Naive thymus-derived CD4-positive, alpha-beta T cell (primary cell): ENCODE measurements at regions of chr7 and their contacts with region 1.

Region 1: DNA sequence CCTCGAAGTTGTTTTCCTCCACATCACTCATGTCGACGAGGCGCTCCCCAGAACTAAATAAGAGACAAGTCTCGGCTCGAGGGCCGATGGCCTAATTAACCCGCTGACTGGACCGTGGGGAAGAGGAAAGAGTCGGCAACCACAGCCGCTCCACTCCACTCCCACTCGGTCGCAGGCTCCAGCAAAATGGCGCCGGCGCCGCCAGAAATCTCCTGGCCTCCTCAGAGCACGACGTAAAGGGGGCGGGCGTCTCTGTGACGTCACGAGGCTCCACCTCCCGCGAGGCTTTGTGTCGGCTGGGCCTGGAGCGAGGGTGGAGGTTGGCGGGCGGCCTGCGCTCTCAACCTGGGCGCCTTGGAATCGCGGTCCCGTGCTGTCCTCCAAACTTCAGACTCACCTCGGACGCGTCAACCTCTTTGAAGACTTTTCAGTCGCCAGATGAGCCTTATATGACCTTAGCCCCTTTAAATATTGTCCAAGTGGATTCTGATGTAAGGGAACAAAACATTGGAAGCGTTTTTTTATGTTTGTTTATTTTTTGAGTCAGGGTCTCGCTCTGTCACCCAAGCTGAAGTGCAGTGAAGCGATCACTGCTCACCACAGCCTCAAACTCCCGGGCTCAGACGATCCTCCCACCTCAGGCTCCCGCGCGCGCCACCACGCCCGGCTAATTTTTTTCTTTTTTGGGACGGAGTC is at the start of gene TRA2A:
- DNase-seq: peak; percentile 93 to 97 (median 95)
- ATAC-seq: peak; percentile 96
- H3K4me3 ChIP-seq: peak within 1 kb of the TSS; percentile 80
- H3K4me3 Mint-ChIP-seq: peak within 1 kb of the TSS; percentile 89 to 100 (median 99)
- H3K27ac ChIP-seq: peak within 1 kb of the TSS; percentile 93
- H3K27ac Mint-ChIP-seq: peak within 1 kb of the TSS; percentile 98 to 100 (median 100)
- H3K4me1 ChIP-seq: peaks cover 30 to 31% of the 10 kb centered on the region in 2 donors
- H3K4me1 Mint-ChIP-seq: peaks cover 28 to 51% (median 46%) of the 10 kb centered on the region in 7 donors
- H3K27me3 ChIP-seq: no peaks in the 10 kb centered on the region
- H3K27me3 Mint-ChIP-seq: no peaks in the 10 kb centered on the region
- total RNA-seq, gene TRA2A: 131 to 263 (median 163) TPM

Region 2: GRCh38 chr7:23105644-23106056 is 426.3 kb before region 1 on chr7 and contains the start of gene KLHL7:
- CTCF ChIA-PET with region 1: no interaction called
- POLR2A ChIA-PET with region 1: interaction called, 3 read pairs
- intact Hi-C with region 1: loop called (anchors 1 kb)
- DNase-seq: peak; percentile 90 to 95 (median 93)
- ATAC-seq: peak; percentile 99
- H3K4me3 ChIP-seq: peak within 1 kb of the TSS; percentile 93
- H3K4me3 Mint-ChIP-seq: peak within 1 kb of the TSS; percentile 90 to 99 (median 96)
- H3K27ac ChIP-seq: peak within 1 kb of the TSS; percentile 90
- H3K27ac Mint-ChIP-seq: peak within 1 kb of the TSS; percentile 91 to 97 (median 96)
- H3K4me1 ChIP-seq: peaks cover 4 to 18% of the 10 kb centered on the region in 2 donors
- H3K4me1 Mint-ChIP-seq: peaks cover 33 to 51% (median 47%) of the 10 kb centered on the region in 7 donors
- H3K27me3 ChIP-seq: no peaks in the 10 kb centered on the region
- H3K27me3 Mint-ChIP-seq: no peaks in the 10 kb centered on the region
- total RNA-seq, gene KLHL7: 16.9 to 22.9 (median 22.7) TPM

Region 3: GRCh38 chr7:23347682-23348180 is 184.2 kb before region 1 on chr7:
- CTCF ChIA-PET with region 1: no interaction called
- POLR2A ChIA-PET with region 1: interaction called, 4 read pairs
- intact Hi-C with region 1: loop called in 1 of 2 experiments (anchors 5 kb)
- DNase-seq: no peak
- ATAC-seq: peak; percentile 66
- H3K4me3 ChIP-seq: no peak overlapping the region
- H3K4me3 Mint-ChIP-seq: peak overlapping the region in 7 of 10 donors; percentile 63 to 87 (median 83)
- H3K27ac ChIP-seq: no peak overlapping the region
- H3K27ac Mint-ChIP-seq: peak overlapping the region in 6 of 9 donors; percentile 57 to 94 (median 80)
- H3K4me1 ChIP-seq: peaks cover 6 to 11% of the 10 kb centered on the region in 2 donors
- H3K4me1 Mint-ChIP-seq: peaks cover 9 to 36% (median 24%) of the 10 kb centered on the region in 7 donors
- H3K27me3 ChIP-seq: no peaks in the 10 kb centered on the region
- H3K27me3 Mint-ChIP-seq: peaks cover 0 to 39% (median 0%) of the 10 kb centered on the region in 5 donors

Region 4: GRCh38 chr7:23490357-23491135 is 41.4 kb before region 1 on chr7:
- CTCF ChIA-PET with region 1: no interaction called
- POLR2A ChIA-PET with region 1: interaction called, 5 read pairs
- intact Hi-C with region 1: loop called (anchors 1 to 2 kb)
- DNase-seq: peak; percentile 39 to 73 (median 62)
- ATAC-seq: peak; percentile 97
- H3K4me3 ChIP-seq: peak overlapping the region; percentile 69
- H3K4me3 Mint-ChIP-seq: peak overlapping the region; percentile 81 to 90 (median 85)
- H3K27ac ChIP-seq: peak overlapping the region; percentile 63
- H3K27ac Mint-ChIP-seq: peak overlapping the region; percentile 74 to 92 (median 84)
- H3K4me1 ChIP-seq: peaks cover 4 to 6% of the 10 kb centered on the region in 2 donors
- H3K4me1 Mint-ChIP-seq: peaks cover 3 to 13% (median 10%) of the 10 kb centered on the region in 7 donors
- H3K27me3 ChIP-seq: no peaks in the 10 kb centered on the region
- H3K27me3 Mint-ChIP-seq: no peaks in the 10 kb centered on the region

Region 5: DNA sequence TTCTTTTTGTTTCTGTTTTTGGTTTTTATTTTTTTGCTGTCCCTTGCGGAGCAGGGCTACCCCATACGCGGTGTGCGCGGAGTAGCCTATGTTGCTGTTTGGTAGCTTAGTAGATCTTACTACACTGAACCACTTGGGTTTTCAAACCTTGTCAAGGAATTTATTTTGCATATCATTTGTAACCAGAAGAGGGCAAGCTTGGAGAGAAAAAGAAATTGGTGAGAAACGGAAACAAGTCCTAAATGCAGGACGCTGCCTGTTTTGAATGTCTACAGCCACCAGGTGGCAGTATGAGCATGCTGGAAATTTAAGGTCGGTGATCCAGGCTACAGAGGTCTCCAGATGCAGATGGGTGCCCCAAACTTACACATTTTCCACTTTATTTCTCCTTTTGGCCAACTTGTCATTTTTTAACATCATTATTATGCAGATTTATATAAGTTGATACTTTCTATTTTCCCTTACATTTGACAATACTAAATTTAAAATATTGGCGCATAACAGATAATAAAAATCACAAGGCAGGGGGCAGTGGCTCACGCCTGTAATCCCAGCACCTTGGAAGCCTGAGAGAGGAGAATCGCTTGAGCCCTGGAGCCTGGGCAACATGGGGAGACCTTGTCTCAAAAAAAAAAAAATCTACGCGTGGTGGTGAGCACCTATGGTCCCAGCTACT is 15.1 kb after region 1 on chr7:
- CTCF ChIA-PET with region 1: interaction called, 17 read pairs
- POLR2A ChIA-PET with region 1: interaction called, 9 read pairs
- intact Hi-C with region 1: loop called (anchors 1 kb)
- DNase-seq: peak; percentile 37 to 89 (median 82)
- ATAC-seq: peak; percentile 98
- H3K4me3 ChIP-seq: no peak overlapping the region
- H3K4me3 Mint-ChIP-seq: no peak overlapping the region
- H3K27ac ChIP-seq: no peak overlapping the region
- H3K27ac Mint-ChIP-seq: peak overlapping the region in 6 of 9 donors; percentile 22 to 90 (median 40)
- H3K4me1 ChIP-seq: no peaks in the 10 kb centered on the region
- H3K4me1 Mint-ChIP-seq: peaks cover 0 to 14% (median 5%) of the 10 kb centered on the region in 7 donors
- H3K27me3 ChIP-seq: no peaks in the 10 kb centered on the region
- H3K27me3 Mint-ChIP-seq: peaks cover 0 to 5% (median 0%) of the 10 kb centered on the region in 5 donors

Region 6: DNA sequence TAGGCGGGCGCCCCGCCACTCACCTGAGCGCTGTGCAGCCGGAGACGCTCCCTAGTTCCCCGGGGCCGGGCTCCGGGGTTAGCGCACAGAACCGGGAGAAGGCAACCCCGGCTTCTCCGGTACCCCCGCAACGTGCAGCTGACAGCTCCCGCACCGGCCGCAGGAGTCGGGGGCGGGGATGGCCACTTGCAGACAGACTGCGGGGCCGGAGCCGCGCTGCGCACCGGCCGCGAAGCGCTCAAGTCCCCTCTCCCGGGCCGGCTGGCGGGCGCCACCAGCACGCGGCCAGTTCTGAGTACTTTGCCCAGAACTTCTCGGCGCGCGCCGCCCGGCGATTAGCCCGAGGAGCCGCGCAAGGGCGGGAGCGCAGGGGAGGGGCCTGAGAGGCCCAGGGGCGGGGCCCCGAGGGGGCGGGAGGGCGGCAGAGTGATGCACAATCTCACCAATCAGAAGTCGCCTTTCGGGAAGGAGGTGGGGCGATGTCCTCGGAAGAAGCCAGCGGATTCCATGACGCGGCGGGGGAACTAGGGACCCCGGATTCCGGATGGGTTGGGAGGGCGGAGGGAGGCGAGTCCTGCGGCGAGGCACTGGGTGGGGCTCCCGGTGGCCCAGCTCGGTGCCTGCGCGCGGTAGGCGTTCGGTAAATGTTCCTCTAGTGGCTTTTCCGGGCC is 1448.1 kb after region 1 on chr7 and contains the start of gene OSBPL3:
- CTCF ChIA-PET with region 1: no interaction called
- POLR2A ChIA-PET with region 1: no interaction called
- intact Hi-C with region 1: loop called (anchors 1 to 2 kb)
- DNase-seq: peak; percentile 86 to 96 (median 93)
- ATAC-seq: peak; percentile 95
- H3K4me3 ChIP-seq: peak within 1 kb of the TSS; percentile 84
- H3K4me3 Mint-ChIP-seq: peak within 1 kb of the TSS; percentile 93 to 97 (median 96)
- H3K27ac ChIP-seq: peak within 1 kb of the TSS; percentile 69
- H3K27ac Mint-ChIP-seq: peak within 1 kb of the TSS; percentile 73 to 95 (median 89)
- H3K4me1 ChIP-seq: peaks cover 26 to 32% of the 10 kb centered on the region in 2 donors
- H3K4me1 Mint-ChIP-seq: peaks cover 40 to 65% (median 56%) of the 10 kb centered on the region in 7 donors
- H3K27me3 ChIP-seq: no peaks in the 10 kb centered on the region
- H3K27me3 Mint-ChIP-seq: peaks cover 0 to 4% (median 0%) of the 10 kb centered on the region in 5 donors
- total RNA-seq, gene OSBPL3: 17.1 to 75.7 (median 22.7) TPM